PC-3 (cell line): ENCODE measurements at regions of chr1 and their contacts with region 1.

Region 1: GRCh38 chr1:243850452-243851256 is 611 bp upstream of the AKT3 start:
- DNase-seq: peak; percentile 84
- ATAC-seq: peak; percentile 59
- H3K4me3 ChIP-seq: peak overlapping the region; percentile 70
- H3K27ac ChIP-seq: peak overlapping the region; percentile 88
- H3K4me1 ChIP-seq: peaks cover 29% of the 10 kb centered on the region
- H3K27me3 ChIP-seq: no peaks in the 10 kb centered on the region
- CTCF ChIP-seq: no peak

Region 2: GRCh38 chr1:243708210-243708609 is 142.4 kb before region 1 on chr1:
- CTCF ChIA-PET with region 1: no interaction called
- POLR2A ChIA-PET with region 1: no interaction called
- intact Hi-C with region 1: loop called (anchors 2 kb)
- DNase-seq: peak; percentile 50
- ATAC-seq: no peak
- H3K4me3 ChIP-seq: no peak overlapping the region
- H3K27ac ChIP-seq: no peak overlapping the region
- H3K4me1 ChIP-seq: peaks cover 15% of the 10 kb centered on the region
- H3K27me3 ChIP-seq: no peaks in the 10 kb centered on the region
- CTCF ChIP-seq: peak; percentile 86

Region 3: GRCh38 chr1:243798726-243799125 is 51.9 kb before region 1 on chr1:
- CTCF ChIA-PET with region 1: no interaction called
- POLR2A ChIA-PET with region 1: interaction called, 10 read pairs
- intact Hi-C with region 1: no loop called
- DNase-seq: peak; percentile 96
- ATAC-seq: peak; percentile 95
- H3K4me3 ChIP-seq: peak overlapping the region; percentile 14; the same call in 1 of the 2 replicates
- H3K27ac ChIP-seq: peak overlapping the region; percentile 76
- H3K4me1 ChIP-seq: peaks cover 27% of the 10 kb centered on the region
- H3K27me3 ChIP-seq: no peaks in the 10 kb centered on the region
- CTCF ChIP-seq: no peak

Region 4: DNA sequence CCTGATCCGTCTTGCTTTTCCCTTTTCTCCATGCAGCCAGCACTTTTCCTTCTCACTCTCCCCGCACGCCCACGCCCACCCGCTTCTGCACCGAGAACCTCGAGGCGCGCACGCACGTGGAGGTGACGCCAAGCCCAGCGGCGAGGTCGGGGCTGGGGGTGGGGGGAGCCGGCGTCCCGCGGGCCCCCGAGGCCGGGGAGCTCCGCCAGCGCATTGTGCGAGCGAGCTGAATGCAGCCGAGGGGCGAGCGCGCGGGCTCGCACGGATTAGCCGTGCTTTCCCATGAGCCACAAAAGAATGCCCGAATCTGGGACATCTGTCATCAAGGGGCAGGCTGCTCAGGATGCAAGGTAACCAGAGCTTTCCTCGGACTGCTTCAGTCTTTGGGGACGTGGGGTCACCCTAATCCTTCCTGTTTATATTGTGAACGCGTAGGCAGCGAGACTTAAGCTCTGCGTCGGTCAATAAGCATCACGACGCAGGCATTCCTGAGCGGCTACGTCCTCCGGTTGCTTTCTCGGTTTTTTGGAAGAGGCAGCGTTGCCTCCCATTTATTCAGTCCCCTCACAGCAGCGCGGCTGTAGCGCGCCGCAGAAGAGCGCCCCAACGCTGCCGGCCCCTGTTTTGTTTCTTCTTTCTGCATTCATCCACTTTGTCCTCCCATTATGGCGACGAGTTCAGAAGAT is 66.7 kb after region 1 on chr1:
- CTCF ChIA-PET with region 1: no interaction called
- POLR2A ChIA-PET with region 1: interaction called, 14 read pairs
- intact Hi-C with region 1: no loop called
- DNase-seq: peak; percentile 93
- ATAC-seq: peak; percentile 83
- H3K4me3 ChIP-seq: peak overlapping the region; percentile 70
- H3K27ac ChIP-seq: peak overlapping the region; percentile 43
- H3K4me1 ChIP-seq: peaks cover 29% of the 10 kb centered on the region
- H3K27me3 ChIP-seq: no peaks in the 10 kb centered on the region
- CTCF ChIP-seq: peak; percentile 31; the same call in 1 of the 2 replicates

Region 5: DNA sequence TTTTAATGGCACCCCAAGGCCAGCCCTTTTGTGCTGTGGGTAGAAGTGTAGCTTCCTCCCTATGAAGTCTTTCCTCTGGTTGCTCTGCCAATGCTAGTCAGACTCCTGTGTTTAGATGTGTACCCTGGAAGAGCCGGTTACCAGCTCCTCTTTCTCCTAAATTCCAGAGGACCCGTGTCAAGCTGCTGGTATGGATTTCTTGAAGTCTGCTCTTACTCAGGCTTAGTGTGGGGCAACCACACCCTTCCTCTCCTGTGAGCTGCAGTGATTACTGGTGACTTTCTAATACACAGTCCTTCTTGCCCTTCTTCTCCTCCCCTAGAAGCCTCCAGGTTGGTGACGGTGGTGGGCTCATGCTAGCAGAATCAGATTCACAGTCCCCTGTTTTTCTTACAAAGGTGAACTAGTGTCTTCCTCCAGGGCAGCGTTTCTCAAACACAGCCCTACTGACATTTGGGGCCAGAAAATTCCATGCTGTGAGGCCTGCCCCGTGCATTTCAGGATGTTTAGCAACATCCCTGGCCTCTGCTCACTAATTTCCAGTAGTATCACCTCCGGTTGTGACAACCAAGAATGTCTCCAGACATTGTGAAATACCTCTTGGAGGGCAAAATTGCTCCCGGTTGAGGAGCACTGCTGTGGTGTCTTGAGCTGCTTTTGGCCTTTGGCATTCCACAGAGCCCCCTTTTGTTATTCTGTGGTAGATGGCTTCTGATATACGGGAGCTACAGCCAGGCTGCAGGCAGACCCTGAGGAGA is 73.7 kb after region 1 on chr1:
- CTCF ChIA-PET with region 1: no interaction called
- POLR2A ChIA-PET with region 1: interaction called, 3 read pairs
- intact Hi-C with region 1: loop called (anchors 2 kb)
- DNase-seq: peak; percentile 98
- ATAC-seq: peak; percentile 90
- H3K4me3 ChIP-seq: peak overlapping the region; percentile 29; the same call in 1 of the 2 replicates
- H3K27ac ChIP-seq: peak overlapping the region; percentile 84
- H3K4me1 ChIP-seq: peaks cover 48% of the 10 kb centered on the region
- H3K27me3 ChIP-seq: no peaks in the 10 kb centered on the region
- CTCF ChIP-seq: no peak

Region 6: DNA sequence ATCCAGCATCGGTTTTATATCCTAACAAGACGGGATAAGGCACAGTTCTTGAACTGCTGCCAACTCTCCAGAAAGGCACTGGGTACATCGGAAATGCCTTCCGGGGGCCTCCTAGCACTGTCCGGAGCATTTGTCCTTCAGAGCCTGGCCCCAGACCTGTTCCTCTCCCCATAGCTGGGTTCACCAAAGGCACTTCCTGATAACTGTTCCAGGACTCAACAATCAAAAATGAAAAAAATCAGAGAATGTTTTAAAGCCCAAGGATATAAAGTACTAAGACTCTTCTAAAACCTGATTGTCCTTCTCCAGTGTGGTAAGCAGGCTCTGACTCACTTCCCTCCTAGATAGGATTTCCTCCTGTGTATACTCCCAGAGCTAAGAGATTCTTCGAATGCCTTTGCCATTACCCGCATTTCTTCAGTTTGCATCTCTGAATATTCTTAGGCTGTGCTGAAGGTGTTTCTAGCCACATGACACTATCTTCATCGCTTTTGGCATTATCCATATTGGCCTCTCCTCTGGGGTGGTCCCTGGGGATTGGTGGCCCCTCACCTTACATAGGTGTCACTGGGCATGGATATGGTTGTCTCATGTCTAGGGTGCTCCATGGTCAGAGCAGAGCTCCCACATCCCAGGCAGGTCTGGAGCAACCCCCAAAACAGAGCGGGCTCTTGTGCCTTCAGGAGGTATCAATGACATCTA is 313.4 kb after region 1 on chr1:
- CTCF ChIA-PET with region 1: no interaction called
- POLR2A ChIA-PET with region 1: no interaction called
- intact Hi-C with region 1: loop called (anchors 5 kb)
- DNase-seq: peak; percentile 99
- ATAC-seq: peak; percentile 92
- H3K4me3 ChIP-seq: peak overlapping the region; percentile 45
- H3K27ac ChIP-seq: peak overlapping the region; percentile 78
- H3K4me1 ChIP-seq: peaks cover 38% of the 10 kb centered on the region
- H3K27me3 ChIP-seq: no peaks in the 10 kb centered on the region
- CTCF ChIP-seq: no peak

Region 7: GRCh38 chr1:244224487-244225430 is 374.1 kb after region 1 on chr1:
- CTCF ChIA-PET with region 1: no interaction called
- POLR2A ChIA-PET with region 1: no interaction called
- intact Hi-C with region 1: loop called (anchors 5 kb)
- DNase-seq: no peak
- ATAC-seq: no peak
- H3K4me3 ChIP-seq: no peak overlapping the region
- H3K27ac ChIP-seq: no peak overlapping the region
- H3K4me1 ChIP-seq: peaks cover 17% of the 10 kb centered on the region
- H3K27me3 ChIP-seq: no peaks in the 10 kb centered on the region
- CTCF ChIP-seq: no peak